ENCODE measurements at regions of chr4 and their contacts with region 1.

Region 1: DNA sequence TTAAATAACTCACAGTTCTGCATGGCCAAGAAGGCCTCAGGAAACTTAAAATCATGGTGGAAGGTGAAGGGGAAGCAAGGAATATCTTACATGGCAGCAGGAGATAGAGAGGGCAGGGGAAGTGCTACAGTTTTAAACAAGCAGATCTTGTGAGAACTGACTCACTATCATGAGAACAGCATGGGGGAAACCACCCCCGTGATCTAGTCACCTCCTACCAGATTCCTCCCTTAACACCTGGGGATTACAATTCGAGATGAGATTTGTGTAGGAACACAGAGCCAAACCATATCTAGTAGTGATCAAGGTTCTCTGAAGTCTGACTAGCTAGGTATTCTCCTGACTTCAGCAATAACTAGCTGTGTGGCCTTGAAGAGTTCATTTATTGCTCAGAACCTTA is 56.0 kb downstream of the BANK1 start:
- DNase-seq: no peak
- H3K4me3 ChIP-seq: no peak overlapping the region
- H3K27ac ChIP-seq: no peak overlapping the region
- H3K4me1 ChIP-seq: no peaks in the 10 kb centered on the region
- H3K27me3 ChIP-seq: no peaks in the 10 kb centered on the region
- CTCF ChIP-seq: no peak
- POLR2A ChIP-seq: no peak

Region 2: DNA sequence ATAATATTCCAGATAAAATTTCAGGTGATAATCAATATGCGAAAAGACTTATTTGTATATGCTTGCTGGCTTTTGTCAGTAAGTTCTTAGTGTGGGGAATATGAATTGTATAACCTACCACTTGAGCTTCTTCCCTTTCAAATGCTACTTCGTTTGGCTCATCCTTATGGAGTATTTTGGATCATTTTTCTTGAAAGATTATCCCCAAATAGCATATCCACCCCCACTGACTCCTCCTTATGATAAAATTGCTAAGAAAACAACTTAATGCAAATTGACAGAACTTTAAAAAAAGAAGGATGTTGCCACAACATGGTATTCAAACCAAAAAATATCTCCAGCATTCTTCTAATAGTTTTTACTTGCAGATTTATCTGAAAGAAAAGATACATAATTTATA is 892.5 kb before region 1 on chr4:
- intact Hi-C with region 1: loop called (anchors 10 kb)
- DNase-seq: no peak
- H3K4me3 ChIP-seq: no peak overlapping the region
- H3K27ac ChIP-seq: no peak overlapping the region
- H3K4me1 ChIP-seq: no peaks in the 10 kb centered on the region
- H3K27me3 ChIP-seq: no peaks in the 10 kb centered on the region
- CTCF ChIP-seq: no peak
- POLR2A ChIP-seq: no peak